ENCODE measurements at regions of chr20 and their contacts with region 1.

Region 1: GRCh38 chr20:12276011-12276680 is 358.5 kb downstream of the BTBD3 start:
- DNase-seq: no peak

Region 2: DNA sequence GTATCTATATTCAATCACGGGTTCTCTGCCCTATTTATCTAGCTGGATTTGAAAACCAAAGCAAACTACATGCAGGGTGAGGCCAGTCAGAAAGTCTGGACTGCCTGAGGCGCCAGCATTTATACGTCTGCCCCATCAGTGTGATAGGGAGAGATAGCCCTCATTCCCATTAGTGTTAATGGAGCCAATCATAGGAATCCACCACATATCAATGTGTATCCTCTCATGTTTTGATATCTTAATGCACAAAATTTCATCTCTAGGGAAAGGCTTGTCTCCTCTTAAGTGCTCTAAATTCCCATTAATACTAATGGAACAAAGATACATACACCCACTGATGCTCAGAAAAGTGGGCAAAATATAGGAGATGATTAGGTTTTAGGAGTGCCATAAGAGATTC is 17.8 kb after region 1 on chr20:
- intact Hi-C with region 1: no loop called
- DNase-seq: no peak

Region 3: GRCh38 chr20:12327205-12327604 is 51.1 kb after region 1 on chr20:
- intact Hi-C with region 1: loop called in 1 of 2 experiments (anchors 10 kb)
- DNase-seq: no peak